ENCODE measurements at regions of chr22 and their contacts with region 1.

Region 1: GRCh38 chr22:36470162-36470993 is 11.1 kb downstream of the TXN2 start:
- DNase-seq: peak; percentile 71 to 92 (median 78)
- ATAC-seq: peak; percentile 98
- H3K4me3 ChIP-seq: no peak overlapping the region
- H3K4me3 Mint-ChIP-seq: no peak overlapping the region
- H3K27ac ChIP-seq: no peak overlapping the region
- H3K27ac Mint-ChIP-seq: peak overlapping the region; percentile 70
- H3K4me1 ChIP-seq: peaks cover 27% of the 10 kb centered on the region
- H3K4me1 Mint-ChIP-seq: peaks cover 26% of the 10 kb centered on the region
- H3K27me3 ChIP-seq: no peaks in the 10 kb centered on the region
- H3K27me3 Mint-ChIP-seq: no peaks in the 10 kb centered on the region
- CTCF ChIP-seq: peak; percentile 89

Region 2: GRCh38 chr22:36439481-36440271 is 30.7 kb before region 1 on chr22:
- CTCF ChIA-PET with region 1: interaction called, 18 read pairs
- POLR2A ChIA-PET with region 1: no interaction called
- intact Hi-C with region 1: loop called in 1 of 2 experiments (anchors 2 kb)
- DNase-seq: peak in 2 of 14 experiments; percentile 26 to 35
- ATAC-seq: no peak
- H3K4me3 ChIP-seq: no peak overlapping the region
- H3K4me3 Mint-ChIP-seq: no peak overlapping the region
- H3K27ac ChIP-seq: no peak overlapping the region
- H3K27ac Mint-ChIP-seq: no peak overlapping the region
- H3K4me1 ChIP-seq: peaks cover 36% of the 10 kb centered on the region
- H3K4me1 Mint-ChIP-seq: peaks cover 39% of the 10 kb centered on the region
- H3K27me3 ChIP-seq: no peaks in the 10 kb centered on the region
- H3K27me3 Mint-ChIP-seq: no peaks in the 10 kb centered on the region
- CTCF ChIP-seq: no peak

Region 3: GRCh38 chr22:36528795-36529751 is 58.7 kb after region 1 on chr22 and contains the start of gene EIF3D:
- CTCF ChIA-PET with region 1: no interaction called
- POLR2A ChIA-PET with region 1: no interaction called
- intact Hi-C with region 1: no loop called
- DNase-seq: peak; percentile 95 to 100 (median 98)
- ATAC-seq: peak; percentile 91
- H3K4me3 ChIP-seq: peak within 1 kb of the TSS; percentile 95
- H3K4me3 Mint-ChIP-seq: peak within 1 kb of the TSS; percentile 92
- H3K27ac ChIP-seq: peak within 1 kb of the TSS; percentile 87 to 94
- H3K27ac Mint-ChIP-seq: peak within 1 kb of the TSS; percentile 93
- H3K4me1 ChIP-seq: peaks cover 19% of the 10 kb centered on the region
- H3K4me1 Mint-ChIP-seq: peaks cover 26% of the 10 kb centered on the region
- H3K27me3 ChIP-seq: no peaks in the 10 kb centered on the region
- H3K27me3 Mint-ChIP-seq: no peaks in the 10 kb centered on the region
- CTCF ChIP-seq: no peak
- total RNA-seq, gene EIF3D: 285 to 286 TPM

Measured in CD4-positive, alpha-beta T cell (primary cell).